IMR-90 (cell line): ENCODE measurements at regions of chr1 and their contacts with region 1.

Region 1: DNA sequence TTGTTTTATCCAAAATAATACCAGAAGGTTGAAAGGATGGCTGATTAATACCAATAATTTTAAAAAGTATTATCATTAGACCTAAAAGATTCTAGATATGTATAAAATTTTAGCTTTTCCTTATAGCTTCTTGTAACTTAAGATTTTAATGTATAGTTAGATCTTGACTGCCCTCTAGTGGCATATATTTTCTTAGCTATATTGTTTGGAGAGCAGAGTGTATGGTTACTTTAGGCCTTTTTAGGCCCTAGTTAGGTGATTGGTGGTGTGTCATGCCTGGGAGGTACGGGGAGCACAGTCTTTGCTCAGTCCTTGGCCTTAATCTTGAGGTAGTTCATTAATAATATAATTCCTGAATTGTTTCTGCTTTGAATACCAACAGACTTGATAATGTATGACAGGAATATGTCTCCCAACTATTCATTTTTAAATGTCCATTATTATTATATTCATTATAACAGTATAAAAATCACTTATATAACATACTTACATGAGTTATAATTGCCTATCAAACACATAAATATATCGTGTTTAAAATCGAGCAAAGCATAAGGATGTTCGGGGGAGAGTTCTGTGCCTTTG is 328.4 kb downstream of the ZP4 start:
- DNase-seq: peak; percentile 69
- ATAC-seq: peak; percentile 75
- H3K4me3 ChIP-seq: no peak overlapping the region
- H3K27ac ChIP-seq: no peak overlapping the region
- H3K4me1 ChIP-seq: no peaks in the 10 kb centered on the region
- H3K27me3 ChIP-seq: no peaks in the 10 kb centered on the region
- CTCF ChIP-seq: peak; percentile 50
- POLR2A ChIP-seq: no peak
- RAD21 ChIP-seq: peak; percentile 37

Region 2: GRCh38 chr1:236103646-236104218 is 1458.6 kb before region 1 on chr1:
- CTCF ChIA-PET with region 1: no interaction called
- POLR2A ChIA-PET with region 1: no interaction called
- dilution Hi-C with region 1: no loop called
- in situ Hi-C with region 1: loop called (anchors 10 kb)
- intact Hi-C with region 1: no loop called
- DNase-seq: peak; percentile 57
- ATAC-seq: peak; percentile 79
- H3K4me3 ChIP-seq: no peak overlapping the region
- H3K27ac ChIP-seq: no peak overlapping the region
- H3K4me1 ChIP-seq: peaks cover 2% of the 10 kb centered on the region; the same call in 1 of the 2 replicates
- H3K27me3 ChIP-seq: peaks cover 7% of the 10 kb centered on the region
- CTCF ChIP-seq: peak; percentile 88
- POLR2A ChIP-seq: no peak
- RAD21 ChIP-seq: peak; percentile 91

Region 3: DNA sequence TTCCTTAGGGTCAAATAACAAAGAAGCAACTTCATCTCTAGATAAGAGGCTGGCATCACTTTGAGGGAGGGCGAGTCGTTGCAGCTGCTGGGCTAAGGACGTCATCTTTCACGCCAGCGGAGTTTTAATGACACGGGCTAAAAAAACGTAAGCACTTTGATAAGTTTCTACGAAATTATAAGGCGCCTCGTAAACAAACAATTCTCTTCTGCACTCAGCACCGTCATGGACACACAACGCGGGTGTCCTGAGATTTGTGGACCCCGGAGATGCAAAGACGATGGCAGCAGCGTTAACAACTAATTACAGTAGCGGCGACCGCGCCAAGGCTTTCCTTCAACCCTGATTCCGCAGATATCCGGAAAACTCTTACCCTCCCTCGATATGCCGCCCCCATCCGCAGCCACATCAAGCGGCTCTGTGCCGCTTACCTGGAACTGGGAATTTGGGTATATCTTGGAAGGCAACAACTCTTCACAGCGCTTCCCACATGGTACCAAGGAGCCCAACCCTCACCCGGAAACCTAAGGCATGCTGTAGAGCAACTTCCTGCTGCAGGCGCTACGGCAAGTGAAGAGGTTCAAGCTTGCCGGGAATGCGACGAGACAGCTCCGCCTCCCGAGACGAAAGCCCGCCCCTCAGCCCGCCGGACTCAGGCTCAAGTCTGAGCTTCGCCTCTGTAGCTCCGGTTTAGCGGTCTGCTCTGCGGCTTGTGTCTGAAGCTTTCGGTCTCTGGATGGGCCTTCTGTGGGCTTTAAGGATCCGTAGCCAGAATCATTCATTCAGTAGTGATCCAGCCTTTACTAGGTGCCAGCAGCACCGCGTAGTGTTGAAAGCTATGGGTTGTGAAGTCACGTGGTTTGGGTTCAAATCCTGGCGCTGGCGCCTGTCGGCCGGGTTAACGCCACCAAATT is 958.1 kb before region 1 on chr1 and contains the start of gene HEATR1:
- CTCF ChIA-PET with region 1: interaction called, 6 read pairs
- POLR2A ChIA-PET with region 1: no interaction called
- dilution Hi-C with region 1: no loop called
- in situ Hi-C with region 1: loop called (anchors 25 kb)
- intact Hi-C with region 1: loop called (anchors 1 kb)
- DNase-seq: peak; percentile 96
- ATAC-seq: peak; percentile 99
- H3K4me3 ChIP-seq: peak within 1 kb of the TSS; percentile 79
- H3K27ac ChIP-seq: peak within 1 kb of the TSS; percentile 80
- H3K4me1 ChIP-seq: no peaks in the 10 kb centered on the region
- H3K27me3 ChIP-seq: no peaks in the 10 kb centered on the region
- CTCF ChIP-seq: no peak
- POLR2A ChIP-seq: peak; percentile 53; the same call in 1 of the 2 replicates
- RAD21 ChIP-seq: no peak
- total RNA-seq, gene HEATR1: 53.8 and 61.1 TPM in 2 replicates

Region 4: DNA sequence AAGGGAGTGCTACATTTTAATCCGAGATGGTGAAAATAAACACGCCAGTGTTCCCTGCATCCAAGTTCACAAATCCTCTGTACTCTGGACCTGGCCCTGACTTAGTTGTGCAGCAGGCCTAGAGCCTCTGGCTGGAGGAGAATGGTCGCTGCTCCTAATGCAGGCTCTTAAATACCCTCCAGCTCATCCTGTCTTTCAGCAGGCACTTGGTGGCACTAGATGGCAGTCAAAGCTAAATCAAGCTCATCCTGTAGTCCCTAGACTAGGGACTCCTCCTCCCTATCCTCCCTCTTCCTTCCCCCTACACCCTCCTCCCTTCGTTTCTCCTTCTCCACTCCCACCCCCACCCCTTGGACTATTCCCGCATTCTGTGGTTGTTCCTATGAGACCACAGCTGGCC is 808.8 kb before region 1 on chr1:
- CTCF ChIA-PET with region 1: interaction called, 4 read pairs
- POLR2A ChIA-PET with region 1: no interaction called
- dilution Hi-C with region 1: no loop called
- in situ Hi-C with region 1: loop called (anchors 10 kb)
- intact Hi-C with region 1: loop called (anchors 2 kb)
- DNase-seq: peak; percentile 21
- ATAC-seq: peak; percentile 78
- H3K4me3 ChIP-seq: no peak overlapping the region
- H3K27ac ChIP-seq: no peak overlapping the region
- H3K4me1 ChIP-seq: no peaks in the 10 kb centered on the region
- H3K27me3 ChIP-seq: no peaks in the 10 kb centered on the region
- CTCF ChIP-seq: peak; percentile 29
- POLR2A ChIP-seq: no peak
- RAD21 ChIP-seq: peak; percentile 36; the same call in 1 of the 2 replicates

Region 5: DNA sequence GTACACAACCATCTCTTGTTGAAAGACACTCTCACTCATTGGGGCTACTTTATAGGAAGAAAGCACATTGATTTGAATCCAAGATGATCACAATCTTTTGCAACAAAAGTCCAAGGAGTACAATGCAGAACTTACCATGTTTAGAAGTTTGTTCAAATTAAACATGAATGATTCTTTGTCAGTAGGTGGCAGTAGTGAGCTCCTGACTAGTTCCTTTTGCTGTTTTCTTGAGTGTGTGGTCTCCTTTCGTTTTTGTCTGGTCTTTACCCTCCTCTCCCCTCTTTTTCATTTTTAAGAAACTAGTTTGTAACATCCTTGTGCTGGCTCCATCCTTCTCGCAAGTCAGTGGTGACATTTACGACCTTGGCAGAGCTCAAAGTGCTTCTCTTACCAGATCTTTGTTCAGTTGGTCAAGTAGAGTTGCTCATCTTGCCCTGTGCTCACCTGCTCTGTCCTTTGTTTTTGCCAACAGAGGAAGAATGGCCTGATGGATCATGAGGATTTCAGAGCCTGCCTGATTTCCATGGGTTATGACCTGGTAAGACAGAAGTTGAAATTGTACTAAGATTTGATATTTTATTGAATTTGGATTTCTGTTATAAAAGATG is 803.0 kb before region 1 on chr1:
- CTCF ChIA-PET with region 1: no interaction called
- POLR2A ChIA-PET with region 1: no interaction called
- dilution Hi-C with region 1: no loop called
- in situ Hi-C with region 1: loop called (anchors 10 kb)
- intact Hi-C with region 1: no loop called
- DNase-seq: peak; percentile 42
- ATAC-seq: peak; percentile 72
- H3K4me3 ChIP-seq: no peak overlapping the region
- H3K27ac ChIP-seq: no peak overlapping the region
- H3K4me1 ChIP-seq: no peaks in the 10 kb centered on the region
- H3K27me3 ChIP-seq: no peaks in the 10 kb centered on the region
- CTCF ChIP-seq: peak; percentile 60
- POLR2A ChIP-seq: no peak
- RAD21 ChIP-seq: peak; percentile 53

Region 6: DNA sequence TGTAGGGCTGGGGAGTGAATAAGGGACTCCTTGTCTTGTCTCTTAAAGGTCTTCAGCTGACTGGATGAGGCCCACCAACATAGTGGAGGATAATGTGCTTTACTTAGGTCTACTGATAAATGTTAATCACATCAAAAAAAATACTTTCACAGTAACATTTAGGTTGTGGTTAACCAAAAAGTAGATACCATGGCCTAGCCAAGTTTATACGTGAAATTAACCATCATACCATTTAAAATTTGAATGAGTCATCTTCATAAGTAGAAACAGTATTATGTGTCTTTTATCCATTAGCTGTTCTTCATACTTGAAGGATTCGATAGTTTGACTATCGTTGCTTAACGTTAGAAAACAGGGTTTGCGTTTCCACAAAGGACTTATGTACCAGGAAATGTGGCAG is 686.4 kb before region 1 on chr1:
- CTCF ChIA-PET with region 1: no interaction called
- POLR2A ChIA-PET with region 1: no interaction called
- dilution Hi-C with region 1: no loop called
- in situ Hi-C with region 1: no loop called
- intact Hi-C with region 1: loop called (anchors 5 kb)
- DNase-seq: peak; percentile 62
- ATAC-seq: peak; percentile 46
- H3K4me3 ChIP-seq: no peak overlapping the region
- H3K27ac ChIP-seq: no peak overlapping the region
- H3K4me1 ChIP-seq: no peaks in the 10 kb centered on the region
- H3K27me3 ChIP-seq: no peaks in the 10 kb centered on the region
- CTCF ChIP-seq: no peak
- POLR2A ChIP-seq: no peak
- RAD21 ChIP-seq: no peak

Region 7: GRCh38 chr1:237736372-237737029 is 174.2 kb after region 1 on chr1:
- CTCF ChIA-PET with region 1: no interaction called
- POLR2A ChIA-PET with region 1: no interaction called
- dilution Hi-C with region 1: no loop called
- in situ Hi-C with region 1: no loop called
- intact Hi-C with region 1: loop called (anchors 10 kb)
- DNase-seq: peak; percentile 1
- ATAC-seq: no peak
- H3K4me3 ChIP-seq: no peak overlapping the region
- H3K27ac ChIP-seq: no peak overlapping the region
- H3K4me1 ChIP-seq: no peaks in the 10 kb centered on the region
- H3K27me3 ChIP-seq: no peaks in the 10 kb centered on the region
- CTCF ChIP-seq: no peak
- POLR2A ChIP-seq: no peak
- RAD21 ChIP-seq: no peak